Endothelial cell of umbilical vein (primary cell): ENCODE measurements at regions of chr17 and their contacts with region 1.

Region 1: GRCh38 chr17:38421171-38421841 is 7.0 kb upstream of the ARHGAP23 start:
- DNase-seq: peak; percentile 29
- H3K4me3 ChIP-seq: no peak overlapping the region
- H3K27ac ChIP-seq: no peak overlapping the region
- H3K4me1 ChIP-seq: peaks cover 26% of the 10 kb centered on the region
- H3K27me3 ChIP-seq: peaks cover 20 to 22% of the 10 kb centered on the region in 2 experiments
- CTCF ChIP-seq: no peak
- POLR2A ChIP-seq: no peak

Region 2: GRCh38 chr17:38434178-38434665 is 12.9 kb after region 1 on chr17:
- CTCF ChIA-PET with region 1: interaction called, 20 read pairs
- POLR2A ChIA-PET with region 1: interaction called, 3 read pairs
- dilution Hi-C with region 1: no loop called
- intact Hi-C with region 1: no loop called
- DNase-seq: no peak
- H3K4me3 ChIP-seq: no peak overlapping the region
- H3K27ac ChIP-seq: no peak overlapping the region
- H3K4me1 ChIP-seq: peaks cover 17% of the 10 kb centered on the region
- H3K27me3 ChIP-seq: no peaks in the 10 kb centered on the region
- CTCF ChIP-seq: no peak
- POLR2A ChIP-seq: no peak

Region 3: GRCh38 chr17:38454516-38454915 is 33.2 kb after region 1 on chr17:
- CTCF ChIA-PET with region 1: interaction called, 20 read pairs
- POLR2A ChIA-PET with region 1: interaction called, 3 read pairs
- dilution Hi-C with region 1: no loop called
- intact Hi-C with region 1: loop called (anchors 1 kb)
- DNase-seq: peak; percentile 80
- H3K4me3 ChIP-seq: peak overlapping the region; percentile 48 to 57 (median 53)
- H3K27ac ChIP-seq: peak overlapping the region; percentile 45
- H3K4me1 ChIP-seq: peaks cover 53% of the 10 kb centered on the region
- H3K27me3 ChIP-seq: no peaks in the 10 kb centered on the region
- CTCF ChIP-seq: no peak
- POLR2A ChIP-seq: peak; percentile 79

Region 4: GRCh38 chr17:38485146-38485468 is 63.8 kb after region 1 on chr17:
- CTCF ChIA-PET with region 1: interaction called, 10 read pairs
- POLR2A ChIA-PET with region 1: no interaction called
- dilution Hi-C with region 1: no loop called
- intact Hi-C with region 1: loop called (anchors 2 kb)
- DNase-seq: no peak
- H3K4me3 ChIP-seq: no peak overlapping the region
- H3K27ac ChIP-seq: no peak overlapping the region
- H3K4me1 ChIP-seq: peaks cover 2% of the 10 kb centered on the region
- H3K27me3 ChIP-seq: no peaks in the 10 kb centered on the region
- CTCF ChIP-seq: no peak
- POLR2A ChIP-seq: no peak

Region 5: DNA sequence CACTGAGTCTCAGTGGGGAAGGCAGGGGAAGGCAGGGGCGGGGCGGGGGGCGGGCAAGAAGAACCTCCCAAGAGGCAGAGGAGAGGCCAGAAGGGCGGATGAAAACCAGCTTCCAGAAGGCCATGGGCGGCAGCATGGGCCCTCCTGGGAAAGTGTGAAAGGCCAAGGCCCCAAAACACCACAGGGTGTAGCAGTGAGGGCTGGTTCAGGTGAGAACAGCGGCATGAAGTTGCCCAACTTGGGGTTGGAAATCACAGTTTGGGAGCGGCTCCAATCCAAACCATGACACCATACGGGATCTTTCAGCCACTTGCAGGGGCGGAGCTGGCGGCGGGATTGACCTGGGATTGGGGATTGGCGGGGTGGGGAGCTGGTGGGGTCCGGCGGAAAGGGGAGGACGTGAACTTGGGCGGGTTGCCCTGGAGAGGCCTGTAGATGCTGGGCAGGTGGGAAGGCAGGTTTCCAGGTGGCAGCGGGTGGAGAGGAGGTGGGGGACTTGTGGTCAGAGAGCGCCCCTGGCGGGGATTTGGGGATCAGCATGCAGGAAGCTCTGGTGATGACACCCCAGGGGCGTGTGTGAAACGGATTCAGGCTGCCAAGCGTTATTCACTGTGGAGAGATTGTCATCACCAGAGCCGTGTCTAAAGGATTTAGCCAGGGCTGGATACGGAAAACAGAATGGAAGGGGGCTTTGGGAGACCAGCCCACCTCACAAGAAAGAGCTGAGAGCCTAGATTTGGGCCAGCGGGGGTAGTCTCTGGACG is 87.9 kb after region 1 on chr17:
- CTCF ChIA-PET with region 1: interaction called, 37 read pairs
- POLR2A ChIA-PET with region 1: interaction called, 3 read pairs
- dilution Hi-C with region 1: no loop called
- intact Hi-C with region 1: no loop called
- DNase-seq: peak; percentile 76
- H3K4me3 ChIP-seq: peak overlapping the region in 2 of 3 experiments; percentile 12 to 13
- H3K27ac ChIP-seq: peak overlapping the region; percentile 10
- H3K4me1 ChIP-seq: peaks cover 13% of the 10 kb centered on the region
- H3K27me3 ChIP-seq: no peaks in the 10 kb centered on the region
- CTCF ChIP-seq: peak; percentile 93 to 95
- POLR2A ChIP-seq: peak; percentile 76

Region 6: GRCh38 chr17:38667099-38667786 is 245.9 kb after region 1 on chr17:
- CTCF ChIA-PET with region 1: interaction called, 17 read pairs
- POLR2A ChIA-PET with region 1: no interaction called
- dilution Hi-C with region 1: no loop called
- intact Hi-C with region 1: loop called (anchors 1 kb)
- DNase-seq: peak; percentile 72
- H3K4me3 ChIP-seq: no peak overlapping the region
- H3K27ac ChIP-seq: no peak overlapping the region
- H3K4me1 ChIP-seq: no peaks in the 10 kb centered on the region
- H3K27me3 ChIP-seq: peaks cover 38% of the 10 kb centered on the region in 2 experiments
- CTCF ChIP-seq: peak; percentile 98 to 99
- POLR2A ChIP-seq: no peak